ENCODE measurements at regions of chr21 and their contacts with region 1.

Region 1: GRCh38 chr21:25402134-25402961 is 204.9 kb downstream of the MRPL39 start:
- DNase-seq: peak; percentile 34
- H3K4me3 Mint-ChIP-seq: no peak overlapping the region
- H3K27ac Mint-ChIP-seq: no peak overlapping the region
- H3K4me1 Mint-ChIP-seq: peaks cover 2% of the 10 kb centered on the region
- H3K27me3 Mint-ChIP-seq: peaks cover 1% of the 10 kb centered on the region

Region 2: GRCh38 chr21:26199456-26199855 is 797.1 kb after region 1 on chr21:
- CTCF ChIA-PET with region 1: no interaction called
- POLR2A ChIA-PET with region 1: no interaction called
- intact Hi-C with region 1: loop called (anchors 5 kb)
- DNase-seq: no peak
- H3K4me3 Mint-ChIP-seq: no peak overlapping the region
- H3K27ac Mint-ChIP-seq: no peak overlapping the region
- H3K4me1 Mint-ChIP-seq: no peaks in the 10 kb centered on the region
- H3K27me3 Mint-ChIP-seq: no peaks in the 10 kb centered on the region

Measured in activated CD4-positive, alpha-beta memory T cell treated with anti-CD3 and anti-CD28 coated beads for 36 hours (primary cell).